GM13976 (cell line): ENCODE measurements at regions of chr10 and their contacts with region 1.

Region 1: GRCh38 chr10:99430451-99431189 is at the start of gene GOT1:
- DNase-seq: peak; percentile 99
- CTCF ChIP-seq: peak; percentile 0

Region 2: GRCh38 chr10:99711129-99711719 is 280.6 kb after region 1 on chr10:
- in situ Hi-C with region 1: loop called (anchors 25 kb)
- DNase-seq: peak; percentile 48
- CTCF ChIP-seq: peak; percentile 62